HEK293T (cell line): ENCODE measurements at regions of chr21 and their contacts with region 1.

Region 1: GRCh38 chr21:41816220-41817165 is 49.6 kb upstream of the RIPK4 start:
- DNase-seq: peak; percentile 83

Region 2: GRCh38 chr21:41612674-41613532 is 203.6 kb before region 1 on chr21:
- CTCF ChIA-PET with region 1: interaction called, 35 read pairs
- POLR2A ChIA-PET with region 1: no interaction called
- DNase-seq: peak; percentile 78

Region 3: GRCh38 chr21:41851090-41851780 is 34.7 kb after region 1 on chr21:
- CTCF ChIA-PET with region 1: no interaction called
- POLR2A ChIA-PET with region 1: no interaction called
- DNase-seq: no peak

Region 4: DNA sequence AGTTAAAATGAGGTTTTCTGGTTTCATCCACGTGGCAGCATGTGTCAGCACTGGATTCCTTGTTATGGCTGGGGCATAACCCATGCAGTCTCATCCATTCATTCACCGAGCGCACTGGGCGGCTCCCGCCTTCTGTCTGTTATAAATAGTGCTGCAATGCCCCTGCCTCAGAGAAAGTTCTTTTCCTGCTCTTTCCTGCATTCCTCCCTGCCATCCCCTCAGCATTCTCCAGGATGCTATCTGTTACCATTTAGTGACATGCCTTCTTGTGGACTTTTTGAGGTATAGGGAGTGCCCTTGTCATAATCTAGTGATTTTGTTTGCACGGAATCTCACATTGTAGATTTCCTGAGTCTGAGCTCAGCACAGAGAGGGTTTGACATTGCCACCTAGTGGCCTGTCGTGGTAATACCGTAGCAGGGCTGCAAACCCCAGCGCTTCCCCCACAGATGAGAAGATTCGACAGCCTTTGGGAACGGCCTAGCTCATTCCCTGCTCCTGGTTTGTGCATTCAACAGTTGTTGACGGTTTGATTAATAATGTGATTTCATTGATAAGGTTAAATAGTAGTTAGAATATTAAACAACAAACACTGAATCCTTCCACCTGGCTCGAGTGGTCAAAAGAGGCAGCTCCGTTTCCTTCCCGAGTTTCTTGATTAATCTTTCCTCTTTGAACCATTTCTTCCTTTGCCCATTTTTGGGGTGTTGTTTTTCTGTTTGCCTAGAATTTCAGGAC is 300.9 kb after region 1 on chr21:
- CTCF ChIA-PET with region 1: interaction called, 11 read pairs
- POLR2A ChIA-PET with region 1: no interaction called
- DNase-seq: peak; percentile 86